BJ (cell line): ENCODE measurements at regions of chr9 and their contacts with region 1.

Region 1: GRCh38 chr9:137029058-137029936 is 1.3 kb upstream of the ABCA2 start:
- DNase-seq: no peak
- H3K4me3 ChIP-seq: no peak overlapping the region; the same call in 1 of the 2 replicates
- H3K27me3 ChIP-seq: no peaks in the 10 kb centered on the region
- CTCF ChIP-seq: peak; percentile 95

Region 2: DNA sequence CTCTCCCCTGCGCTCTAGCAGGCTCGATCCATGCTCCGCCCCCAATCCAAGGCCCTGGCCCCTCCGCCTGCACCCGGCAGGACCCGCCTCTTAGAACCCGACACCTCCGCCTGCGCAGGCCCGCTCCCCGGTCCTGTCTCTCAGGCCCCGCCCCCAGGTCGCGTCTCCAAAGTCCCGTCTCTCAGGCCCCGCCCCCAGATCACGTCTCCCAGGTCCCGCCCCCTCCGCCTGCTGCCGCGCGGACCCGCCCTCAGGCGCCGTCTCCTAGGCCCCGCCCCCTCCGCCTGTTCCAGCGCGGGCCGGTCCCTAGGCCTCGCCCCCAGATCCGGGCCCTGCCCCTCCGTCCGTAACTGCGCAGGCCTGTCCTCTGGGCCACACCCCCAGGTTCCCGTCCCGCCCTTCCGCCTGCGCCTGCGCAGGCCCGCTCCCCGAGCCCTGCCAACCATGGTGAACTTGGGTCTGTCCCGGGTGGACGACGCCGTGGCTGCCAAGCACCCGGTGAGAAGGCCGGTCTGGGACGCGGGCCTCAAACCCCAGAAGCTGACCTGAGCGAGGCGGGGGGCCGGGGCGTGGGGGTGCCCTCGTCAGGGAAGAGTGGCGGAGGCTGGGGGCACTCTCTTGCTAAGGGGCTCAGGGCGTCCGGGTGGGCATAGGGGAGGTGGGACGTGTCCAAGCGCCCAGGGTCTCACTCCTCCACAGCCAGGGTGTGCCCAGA is 238.2 kb before region 1 on chr9 and contains the start of gene TMEM141:
- CTCF ChIA-PET with region 1: interaction called, 52 read pairs
- POLR2A ChIA-PET with region 1: no interaction called
- DNase-seq: peak; percentile 94
- H3K4me3 ChIP-seq: peak within 1 kb of the TSS; percentile 99
- H3K27me3 ChIP-seq: peaks cover 3% of the 10 kb centered on the region
- CTCF ChIP-seq: no peak
- polyA plus RNA-seq, gene TMEM141: 51.5 and 62.5 TPM in 2 replicates

Region 3: DNA sequence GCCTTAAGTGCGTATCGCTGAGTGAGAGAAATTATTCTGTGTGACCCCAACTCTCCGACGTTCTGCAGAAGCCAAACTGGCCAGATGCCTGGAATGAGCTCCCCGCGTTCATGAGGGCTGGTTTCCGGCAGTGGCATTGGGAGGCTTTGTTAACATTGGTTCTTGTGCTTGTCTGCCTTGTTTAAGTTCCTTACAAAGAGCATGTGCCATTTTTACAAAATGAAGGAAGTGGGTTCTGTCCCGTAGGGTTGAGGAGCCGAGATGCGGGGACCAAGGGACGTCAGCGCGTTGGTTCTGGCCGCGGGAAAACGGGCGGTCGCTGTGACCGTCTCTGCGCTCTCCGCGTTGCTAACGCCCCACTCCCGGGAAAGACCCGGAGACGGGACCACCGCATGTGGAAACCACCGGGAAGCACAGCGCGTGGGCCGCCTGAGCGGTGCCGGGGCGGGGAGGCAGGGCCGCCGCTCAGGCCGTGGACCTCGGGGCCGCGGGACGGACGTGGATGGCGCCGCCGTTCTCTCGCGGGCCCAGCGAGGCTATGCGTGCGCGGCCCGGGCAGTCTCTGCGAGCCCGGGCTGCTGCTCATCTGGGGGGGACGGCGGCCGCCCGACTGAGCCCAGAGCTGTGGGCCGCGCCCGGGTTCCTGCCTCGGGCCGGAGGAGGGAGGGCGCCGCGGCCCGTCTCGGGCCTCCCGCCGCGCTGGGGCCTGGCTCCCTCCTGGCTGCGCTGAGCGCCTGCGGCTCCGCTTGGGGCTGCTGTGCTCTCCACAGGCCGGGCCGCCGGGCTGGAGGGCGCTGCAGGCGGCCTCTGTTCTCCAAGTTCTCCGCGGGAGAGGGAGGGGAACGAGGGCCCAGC is 208.1 kb before region 1 on chr9:
- CTCF ChIA-PET with region 1: no interaction called
- POLR2A ChIA-PET with region 1: no interaction called
- DNase-seq: no peak
- H3K4me3 ChIP-seq: no peak overlapping the region
- H3K27me3 ChIP-seq: no peaks in the 10 kb centered on the region
- CTCF ChIP-seq: no peak

Region 4: GRCh38 chr9:136944519-136945279 is 84.6 kb before region 1 on chr9 and contains the starts of genes C8G and FBXW5:
- CTCF ChIA-PET with region 1: interaction called, 118 read pairs
- POLR2A ChIA-PET with region 1: no interaction called
- DNase-seq: peak; percentile 25
- H3K4me3 ChIP-seq: peak within 1 kb of the TSS; percentile 96
- H3K27me3 ChIP-seq: no peaks in the 10 kb centered on the region
- CTCF ChIP-seq: peak; percentile 93
- polyA plus RNA-seq, gene C8G: 0.48 and 0.60 TPM in 2 replicates
- polyA plus RNA-seq, gene FBXW5: 46.9 and 71.9 TPM in 2 replicates

Region 5: DNA sequence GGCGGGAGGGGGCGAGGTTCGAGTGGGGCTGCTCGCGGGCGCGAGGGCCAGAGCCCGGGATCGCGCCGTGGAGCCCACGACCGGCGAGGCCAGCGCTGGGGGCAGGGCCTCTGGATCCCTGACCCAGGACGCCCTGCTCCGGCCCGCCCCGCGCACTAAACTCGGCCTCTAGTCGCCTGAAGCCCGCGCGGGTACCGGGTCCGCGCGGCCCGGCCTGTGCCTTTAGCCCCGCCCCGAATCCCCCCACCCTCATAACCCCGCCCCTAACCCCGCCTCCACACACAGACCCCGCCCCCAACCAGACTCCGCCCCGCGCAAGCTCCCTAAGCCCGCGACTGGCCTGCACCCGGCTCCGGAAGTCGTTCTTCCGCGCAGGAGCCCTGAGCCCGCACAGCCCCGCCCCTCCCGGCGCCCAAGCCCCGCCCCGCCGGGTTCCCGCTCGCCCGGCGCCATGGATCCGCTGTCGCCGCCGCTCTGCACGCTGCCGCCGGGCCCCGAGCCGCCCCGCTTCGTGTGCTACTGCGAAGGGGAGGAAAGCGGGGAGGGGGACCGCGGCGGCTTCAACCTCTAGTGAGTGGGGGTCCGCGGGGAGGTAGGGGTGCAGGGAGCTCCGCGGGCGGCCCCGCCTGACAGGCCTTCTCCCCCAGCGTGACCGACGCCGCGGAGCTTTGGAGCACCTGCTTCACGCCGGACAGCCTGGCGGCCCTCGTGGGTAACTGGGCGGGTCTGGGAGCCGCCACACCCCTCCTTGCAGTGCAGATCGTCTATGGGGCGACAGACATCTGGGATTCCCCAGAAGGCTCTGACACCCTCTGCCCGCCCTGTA is 37.1 kb before region 1 on chr9 and contains the start of gene PAXX:
- CTCF ChIA-PET with region 1: interaction called, 30 read pairs
- POLR2A ChIA-PET with region 1: no interaction called
- DNase-seq: peak; percentile 19
- H3K4me3 ChIP-seq: peak within 1 kb of the TSS; percentile 63
- H3K27me3 ChIP-seq: no peaks in the 10 kb centered on the region
- CTCF ChIP-seq: no peak
- polyA plus RNA-seq, gene PAXX: 10.3 and 11.8 TPM in 2 replicates

Region 6: DNA sequence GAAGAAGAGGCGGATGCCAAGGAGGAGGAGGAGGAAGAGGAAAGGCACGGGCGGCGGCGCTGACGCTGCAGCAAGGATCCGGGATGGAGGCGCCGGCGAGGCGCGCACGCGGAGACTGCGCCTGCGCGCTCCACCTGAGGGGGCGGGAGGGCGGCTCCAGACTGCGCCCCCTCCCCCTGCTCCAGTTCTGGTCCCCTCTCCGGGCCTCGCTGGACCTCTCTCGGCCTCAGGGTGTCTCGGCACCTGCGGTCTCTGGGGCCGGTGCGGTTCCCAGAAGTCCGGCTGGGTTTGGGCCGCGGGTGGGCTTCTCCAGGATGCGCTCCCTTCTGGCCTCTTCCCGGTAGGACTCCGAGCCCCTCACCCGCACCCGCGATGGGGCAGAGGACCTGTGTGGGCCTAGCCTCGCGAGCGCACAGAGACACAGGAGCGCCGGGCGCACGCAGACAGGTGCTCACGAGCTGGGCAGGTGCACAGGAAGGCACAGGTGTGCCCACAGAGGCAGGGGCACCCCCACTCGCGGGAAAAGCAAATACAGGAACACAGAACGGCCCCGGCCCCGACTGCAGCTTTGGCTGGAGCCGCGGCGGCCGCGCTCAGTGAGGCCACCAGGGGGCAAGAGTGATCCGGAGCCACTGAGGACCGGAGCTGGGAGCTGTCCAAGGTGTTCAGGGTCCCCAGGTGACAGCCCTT is 16.9 kb after region 1 on chr9 and contains the start of gene NPDC1:
- CTCF ChIA-PET with region 1: interaction called, 27 read pairs
- POLR2A ChIA-PET with region 1: no interaction called
- DNase-seq: no peak
- H3K4me3 ChIP-seq: peak within 1 kb of the TSS; percentile 55
- H3K27me3 ChIP-seq: peaks cover 7% of the 10 kb centered on the region; the same call in 1 of the 2 replicates
- CTCF ChIP-seq: peak; percentile 95
- polyA plus RNA-seq, gene NPDC1: 21.8 and 31.9 TPM in 2 replicates

Region 7: GRCh38 chr9:137070201-137070905 is 41.1 kb after region 1 on chr9 and contains the start of gene SAPCD2:
- CTCF ChIA-PET with region 1: interaction called, 11 read pairs
- POLR2A ChIA-PET with region 1: interaction called, 3 read pairs
- DNase-seq: no peak
- H3K4me3 ChIP-seq: peak within 1 kb of the TSS; percentile 39
- H3K27me3 ChIP-seq: no peaks in the 10 kb centered on the region
- CTCF ChIP-seq: no peak
- polyA plus RNA-seq, gene SAPCD2: 5.1 and 8.6 TPM in 2 replicates

Region 8: DNA sequence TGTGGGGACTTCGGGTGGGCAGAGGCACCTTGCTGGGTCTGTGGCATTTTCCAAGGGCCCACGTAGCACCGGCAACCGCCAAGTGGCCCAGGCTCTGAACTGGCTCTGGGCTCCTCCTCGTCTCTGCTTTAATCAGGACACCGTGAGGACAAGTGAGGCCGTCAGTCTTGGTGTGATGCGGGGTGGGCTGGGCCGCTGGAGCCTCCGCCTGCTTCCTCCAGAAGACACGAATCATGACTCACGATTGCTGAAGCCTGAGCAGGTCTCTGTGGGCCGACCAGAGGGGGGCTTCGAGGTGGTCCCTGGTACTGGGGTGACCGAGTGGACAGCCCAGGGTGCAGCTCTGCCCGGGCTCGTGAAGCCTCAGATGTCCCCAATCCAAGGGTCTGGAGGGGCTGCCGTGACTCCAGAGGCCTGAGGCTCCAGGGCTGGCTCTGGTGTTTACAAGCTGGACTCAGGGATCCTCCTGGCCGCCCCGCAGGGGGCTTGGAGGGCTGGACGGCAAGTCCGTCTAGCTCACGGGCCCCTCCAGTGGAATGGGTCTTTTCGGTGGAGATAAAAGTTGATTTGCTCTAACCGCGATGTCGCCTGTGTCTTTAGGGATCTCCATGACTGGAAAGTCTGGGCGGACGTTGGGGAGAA is 79.4 kb after region 1 on chr9:
- CTCF ChIA-PET with region 1: no interaction called
- POLR2A ChIA-PET with region 1: no interaction called
- DNase-seq: no peak
- H3K4me3 ChIP-seq: no peak overlapping the region
- H3K27me3 ChIP-seq: no peaks in the 10 kb centered on the region
- CTCF ChIP-seq: no peak

Region 9: GRCh38 chr9:137223078-137223970 is 194.0 kb after region 1 on chr9:
- CTCF ChIA-PET with region 1: interaction called, 12 read pairs
- POLR2A ChIA-PET with region 1: no interaction called
- DNase-seq: peak; percentile 93
- H3K4me3 ChIP-seq: peak overlapping the region; percentile 86
- H3K27me3 ChIP-seq: no peaks in the 10 kb centered on the region
- CTCF ChIP-seq: no peak